ENCODE measurements at regions of chr17 and their contacts with region 1.

Region 1: GRCh38 chr17:19004421-19005136 is at the start of gene FAM83G:
- DNase-seq: peak; percentile 71 to 92
- H3K4me3 ChIP-seq: peak within 1 kb of the TSS; percentile 62 to 86
- H3K27ac ChIP-seq: peak within 1 kb of the TSS; percentile 81 to 85
- H3K4me1 ChIP-seq: peaks cover 5 to 7% of the 10 kb centered on the region in 2 donors
- H3K27me3 ChIP-seq: no peaks in the 10 kb centered on the region
- CTCF ChIP-seq: no peak
- total RNA-seq, gene FAM83G: 11.2 TPM

Region 2: GRCh38 chr17:18855831-18856569 is 148.6 kb before region 1 on chr17:
- intact Hi-C with region 1: loop called (anchors 5 kb)
- DNase-seq: peak; percentile 83 to 96
- H3K4me3 ChIP-seq: peak overlapping the region; percentile 62 to 86
- H3K27ac ChIP-seq: peak overlapping the region; percentile 73 to 94
- H3K4me1 ChIP-seq: peaks cover 0 to 11% of the 10 kb centered on the region in 2 donors
- H3K27me3 ChIP-seq: no peaks in the 10 kb centered on the region
- CTCF ChIP-seq: no peak

Region 3: DNA sequence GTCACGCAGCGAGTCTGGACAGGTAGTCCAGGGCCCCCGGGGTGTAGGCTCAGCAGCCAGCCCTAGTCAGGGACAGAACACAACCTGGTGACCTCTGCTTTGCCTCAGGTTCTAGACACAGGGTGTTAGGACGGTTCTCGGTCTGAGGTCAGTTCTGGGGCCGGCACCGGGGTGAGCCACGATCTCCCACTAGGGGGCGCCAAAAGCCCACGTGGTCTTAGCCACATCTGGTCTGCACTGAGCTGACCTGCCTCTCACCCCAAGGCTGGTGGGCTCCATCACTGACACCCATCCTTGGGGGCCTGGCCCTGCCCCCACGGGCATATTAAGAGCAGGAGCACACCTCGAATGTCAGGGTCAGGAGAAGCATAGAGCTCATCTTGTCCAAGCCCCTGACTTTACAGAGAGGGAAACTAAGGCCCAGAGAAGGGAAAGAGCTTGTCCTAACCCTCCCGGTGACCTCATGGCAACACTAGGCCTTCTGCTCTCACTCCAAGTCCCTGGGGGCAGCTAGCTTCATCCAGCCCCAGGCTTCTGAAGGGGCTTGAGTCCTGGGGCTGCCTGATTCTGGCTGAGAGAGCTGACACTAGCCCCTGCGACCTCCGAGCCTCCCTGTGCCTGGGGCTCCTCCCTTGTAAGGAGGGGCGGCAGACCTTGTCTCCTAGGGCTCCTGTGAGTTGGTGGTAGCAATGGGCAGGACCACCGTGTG is 43.6 kb before region 1 on chr17:
- intact Hi-C with region 1: loop called (anchors 5 kb)
- DNase-seq: peak in 1 of 2 donors; percentile 84
- H3K4me3 ChIP-seq: no peak overlapping the region
- H3K27ac ChIP-seq: no peak overlapping the region
- H3K4me1 ChIP-seq: no peaks in the 10 kb centered on the region
- H3K27me3 ChIP-seq: no peaks in the 10 kb centered on the region
- CTCF ChIP-seq: peak; percentile 79 to 93 (median 87)

Measured in ascending aorta (tissue), 2 donors.